K562 (cell line): ENCODE measurements at regions of chr2 and their contacts with region 1.

Region 1: DNA sequence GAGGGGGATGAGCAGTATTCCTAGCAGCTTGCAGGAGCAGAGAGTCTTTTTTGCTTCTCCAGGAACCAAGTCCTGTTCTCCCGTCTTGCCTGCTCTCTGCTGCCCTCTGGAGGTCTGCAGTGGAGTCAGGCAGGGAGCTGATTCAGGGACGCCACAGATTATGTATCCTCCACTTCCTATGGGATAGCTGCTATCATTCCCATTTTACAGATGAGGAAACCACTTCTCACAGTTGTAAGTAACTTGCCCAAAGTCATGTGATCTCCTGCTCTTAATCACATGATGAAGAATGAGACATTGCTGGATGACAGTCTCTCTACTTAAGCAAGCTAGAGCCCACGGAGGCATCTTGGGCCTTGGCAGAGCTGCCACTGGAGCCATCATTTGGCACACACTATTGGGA is 8.3 kb downstream of the SLC4A5 start:
- DNase-seq: peak; percentile 70 to 79 (median 74)
- ATAC-seq: peak; percentile 92
- H3K4me3 ChIP-seq: no peak overlapping the region
- H3K27ac ChIP-seq: no peak overlapping the region
- H3K4me1 ChIP-seq: no peaks in the 10 kb centered on the region
- H3K27me3 ChIP-seq: no peaks in the 10 kb centered on the region; a peak in 1 of 5 replicates
- CTCF ChIP-seq: peak; percentile 87 to 90 (median 88)
- EP300 ChIP-seq: no peak
- POLR2A ChIP-seq: no peak
- RAD21 ChIP-seq: peak; percentile 80 to 90

Region 2: DNA sequence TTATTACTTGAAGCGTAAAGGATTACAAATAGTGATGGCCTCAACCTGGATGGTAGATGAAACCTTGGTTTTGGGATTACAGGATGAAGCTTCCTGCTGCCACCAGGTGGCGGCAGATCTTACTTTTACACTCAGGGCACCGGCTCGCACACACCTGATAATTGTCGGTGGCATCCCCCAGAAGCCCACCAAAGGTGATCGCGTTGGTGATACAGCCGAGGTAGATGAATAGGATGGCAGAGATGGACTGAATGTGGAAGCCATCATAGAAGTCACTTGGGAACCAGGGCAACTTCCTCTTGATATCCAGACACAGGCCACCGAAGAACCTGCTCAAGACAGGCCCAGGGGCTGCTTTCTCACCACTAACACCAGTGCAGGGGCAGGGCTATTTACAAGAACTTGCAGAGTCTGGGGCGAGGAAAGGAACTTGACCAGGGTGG is 84.7 kb before region 1 on chr2:
- CTCF ChIA-PET with region 1: interaction called, 14 read pairs
- POLR2A ChIA-PET with region 1: interaction called, 4 read pairs
- in situ Hi-C with region 1: no loop called
- intact Hi-C with region 1: loop called (anchors 1 kb)
- DNase-seq: peak; percentile 72 to 76 (median 75)
- ATAC-seq: peak; percentile 88
- H3K4me3 ChIP-seq: no peak overlapping the region
- H3K27ac ChIP-seq: no peak overlapping the region
- H3K4me1 ChIP-seq: peaks cover 0 to 3% of the 10 kb centered on the region in 2 experiments; a peak in 2 of 5 replicates
- H3K27me3 ChIP-seq: peaks cover 9 to 40% of the 10 kb centered on the region in 2 experiments; a peak in 4 of 5 replicates
- CTCF ChIP-seq: peak; percentile 75 to 87 (median 86)
- EP300 ChIP-seq: no peak; the same call in 1 of the 2 replicates
- POLR2A ChIP-seq: no peak
- RAD21 ChIP-seq: peak; percentile 72 to 89

Region 3: GRCh38 chr2:74278176-74278575 is 56.8 kb before region 1 on chr2:
- CTCF ChIA-PET with region 1: interaction called, 18 read pairs
- POLR2A ChIA-PET with region 1: interaction called, 4 read pairs
- in situ Hi-C with region 1: no loop called
- intact Hi-C with region 1: no loop called
- DNase-seq: peak in 1 of 4 experiments; percentile 41
- ATAC-seq: peak; percentile 77
- H3K4me3 ChIP-seq: no peak overlapping the region
- H3K27ac ChIP-seq: no peak overlapping the region
- H3K4me1 ChIP-seq: no peaks in the 10 kb centered on the region; a peak in 1 of 5 replicates
- H3K27me3 ChIP-seq: peaks cover 17 to 41% of the 10 kb centered on the region in 2 experiments; a peak in 4 of 5 replicates
- CTCF ChIP-seq: peak in 2 of 3 experiments; percentile 42 to 66; a peak in 4 of 6 replicates
- EP300 ChIP-seq: no peak
- POLR2A ChIP-seq: no peak
- RAD21 ChIP-seq: peak; percentile 76 to 80

Region 4: GRCh38 chr2:74472086-74472944 is 137.4 kb after region 1 on chr2 and contains the start of gene MRPL53:
- CTCF ChIA-PET with region 1: interaction called, 4 read pairs
- POLR2A ChIA-PET with region 1: interaction called, 3 read pairs
- in situ Hi-C with region 1: no loop called
- intact Hi-C with region 1: loop called (anchors 2 kb)
- DNase-seq: peak; percentile 80 to 97 (median 80)
- ATAC-seq: peak; percentile 93
- H3K4me3 ChIP-seq: peak within 1 kb of the TSS; percentile 83
- H3K27ac ChIP-seq: peak within 1 kb of the TSS; percentile 95
- H3K4me1 ChIP-seq: peaks cover 12 to 16% of the 10 kb centered on the region in 2 experiments; a peak in 3 of 5 replicates
- H3K27me3 ChIP-seq: no peaks in the 10 kb centered on the region
- CTCF ChIP-seq: peak in 1 of 3 experiments; percentile 11; a peak in 2 of 6 replicates
- EP300 ChIP-seq: peak; percentile 33; the same call in 1 of the 2 replicates
- POLR2A ChIP-seq: peak; percentile 95
- RAD21 ChIP-seq: peak in 1 of 2 experiments; percentile 30; a peak in 1 of 4 replicates
- polyA plus RNA-seq, gene MRPL53: 24.3 to 41.1 TPM

Region 5: DNA sequence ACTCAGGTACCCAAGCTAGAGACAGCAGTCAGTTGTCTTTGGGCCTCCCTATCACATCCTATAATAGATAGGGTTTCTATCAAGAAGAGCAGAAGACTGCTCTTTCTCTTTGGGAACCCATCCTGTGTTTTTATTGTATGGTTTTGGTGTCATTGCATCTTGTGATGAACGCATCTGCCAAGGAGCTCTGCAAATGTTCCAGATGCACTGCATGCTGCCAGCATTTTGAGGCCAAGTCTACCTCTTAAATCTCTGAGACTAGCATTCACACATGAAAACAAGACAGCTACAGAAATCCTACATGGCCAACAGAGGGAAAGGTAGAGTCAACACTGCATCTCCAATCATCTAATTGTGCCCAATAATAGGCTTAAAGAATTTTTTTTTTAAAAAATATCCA is 333.2 kb after region 1 on chr2:
- CTCF ChIA-PET with region 1: no interaction called
- POLR2A ChIA-PET with region 1: no interaction called
- in situ Hi-C with region 1: no loop called
- intact Hi-C with region 1: no loop called
- DNase-seq: no peak
- ATAC-seq: no peak
- H3K4me3 ChIP-seq: no peak overlapping the region
- H3K27ac ChIP-seq: no peak overlapping the region
- H3K4me1 ChIP-seq: no peaks in the 10 kb centered on the region
- H3K27me3 ChIP-seq: peaks cover 3 to 10% of the 10 kb centered on the region in 2 experiments; a peak in 4 of 5 replicates
- CTCF ChIP-seq: no peak
- EP300 ChIP-seq: no peak
- POLR2A ChIP-seq: no peak
- RAD21 ChIP-seq: no peak

Region 6: DNA sequence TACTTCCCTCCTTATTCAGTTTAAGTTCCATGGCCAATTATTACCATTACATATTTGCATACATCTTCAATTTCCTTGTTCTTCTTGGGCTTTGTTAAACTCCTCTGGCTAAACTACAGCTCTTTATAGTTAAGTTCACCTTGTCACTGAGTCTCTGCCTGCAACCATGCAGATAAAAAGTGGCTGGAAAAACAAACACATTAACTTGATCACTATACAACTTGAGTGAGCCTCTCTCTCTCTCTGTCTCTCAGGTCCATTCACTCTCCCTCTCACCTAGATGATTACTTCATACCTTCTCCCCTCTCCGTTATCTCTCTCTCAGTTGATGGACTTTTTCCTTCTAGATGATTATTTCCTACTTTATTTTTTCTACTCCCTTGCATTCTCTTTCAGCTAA is 1345.5 kb after region 1 on chr2:
- CTCF ChIA-PET with region 1: no interaction called
- POLR2A ChIA-PET with region 1: no interaction called
- in situ Hi-C with region 1: no loop called
- intact Hi-C with region 1: no loop called
- DNase-seq: no peak
- ATAC-seq: no peak
- H3K4me3 ChIP-seq: no peak overlapping the region
- H3K27ac ChIP-seq: no peak overlapping the region
- H3K4me1 ChIP-seq: peaks cover 6 to 15% of the 10 kb centered on the region in 2 experiments; a peak in 4 of 5 replicates
- H3K27me3 ChIP-seq: no peaks in the 10 kb centered on the region
- CTCF ChIP-seq: no peak
- EP300 ChIP-seq: no peak
- POLR2A ChIP-seq: no peak
- RAD21 ChIP-seq: no peak